CD4-positive, alpha-beta memory T cell (primary cell): ENCODE measurements at regions of chr15 and their contacts with region 1.

Region 1: GRCh38 chr15:74010929-74011540 is 16.5 kb downstream of the PML start:
- DNase-seq: no peak
- H3K4me3 ChIP-seq: no peak overlapping the region
- H3K4me3 Mint-ChIP-seq: no peak overlapping the region
- H3K27ac ChIP-seq: no peak overlapping the region
- H3K27ac Mint-ChIP-seq: peak overlapping the region in 4 of 7 donors; percentile 38 to 70 (median 52)
- H3K4me1 ChIP-seq: peaks cover 72% of the 10 kb centered on the region
- H3K4me1 Mint-ChIP-seq: peaks cover 50 to 81% (median 68%) of the 10 kb centered on the region in 4 donors
- H3K27me3 ChIP-seq: no peaks in the 10 kb centered on the region
- H3K27me3 Mint-ChIP-seq: no peaks in the 10 kb centered on the region

Region 2: DNA sequence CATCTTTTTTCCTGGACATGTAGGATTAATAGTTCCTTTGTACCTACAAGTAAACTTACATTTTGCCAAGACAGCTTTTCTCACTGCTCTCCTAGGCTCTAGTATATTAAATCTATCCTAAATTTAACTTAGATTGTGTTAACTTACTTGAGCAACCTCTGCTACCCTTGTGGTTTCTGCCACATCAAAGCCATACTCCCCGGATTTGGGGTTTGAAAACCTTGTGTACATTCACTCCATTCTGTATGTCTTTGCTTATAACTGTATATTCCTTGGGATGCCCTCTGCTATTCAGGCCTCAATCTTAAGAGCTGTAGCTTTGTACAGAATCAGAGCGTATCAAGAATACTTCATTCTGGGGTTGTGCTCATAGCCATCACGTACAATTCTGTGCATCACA is 1476.5 kb before region 1 on chr15:
- CTCF ChIA-PET with region 1: no interaction called
- POLR2A ChIA-PET with region 1: no interaction called
- intact Hi-C with region 1: no loop called
- DNase-seq: peak; percentile 32 to 76 (median 62)
- H3K4me3 ChIP-seq: no peak overlapping the region
- H3K4me3 Mint-ChIP-seq: peak overlapping the region in 6 of 8 donors; percentile 4 to 72 (median 48)
- H3K27ac ChIP-seq: no peak overlapping the region
- H3K27ac Mint-ChIP-seq: peak overlapping the region in 3 of 7 donors; percentile 10 to 77 (median 53)
- H3K4me1 ChIP-seq: peaks cover 37% of the 10 kb centered on the region
- H3K4me1 Mint-ChIP-seq: peaks cover 34 to 74% (median 50%) of the 10 kb centered on the region in 4 donors
- H3K27me3 ChIP-seq: no peaks in the 10 kb centered on the region
- H3K27me3 Mint-ChIP-seq: no peaks in the 10 kb centered on the region

Region 3: DNA sequence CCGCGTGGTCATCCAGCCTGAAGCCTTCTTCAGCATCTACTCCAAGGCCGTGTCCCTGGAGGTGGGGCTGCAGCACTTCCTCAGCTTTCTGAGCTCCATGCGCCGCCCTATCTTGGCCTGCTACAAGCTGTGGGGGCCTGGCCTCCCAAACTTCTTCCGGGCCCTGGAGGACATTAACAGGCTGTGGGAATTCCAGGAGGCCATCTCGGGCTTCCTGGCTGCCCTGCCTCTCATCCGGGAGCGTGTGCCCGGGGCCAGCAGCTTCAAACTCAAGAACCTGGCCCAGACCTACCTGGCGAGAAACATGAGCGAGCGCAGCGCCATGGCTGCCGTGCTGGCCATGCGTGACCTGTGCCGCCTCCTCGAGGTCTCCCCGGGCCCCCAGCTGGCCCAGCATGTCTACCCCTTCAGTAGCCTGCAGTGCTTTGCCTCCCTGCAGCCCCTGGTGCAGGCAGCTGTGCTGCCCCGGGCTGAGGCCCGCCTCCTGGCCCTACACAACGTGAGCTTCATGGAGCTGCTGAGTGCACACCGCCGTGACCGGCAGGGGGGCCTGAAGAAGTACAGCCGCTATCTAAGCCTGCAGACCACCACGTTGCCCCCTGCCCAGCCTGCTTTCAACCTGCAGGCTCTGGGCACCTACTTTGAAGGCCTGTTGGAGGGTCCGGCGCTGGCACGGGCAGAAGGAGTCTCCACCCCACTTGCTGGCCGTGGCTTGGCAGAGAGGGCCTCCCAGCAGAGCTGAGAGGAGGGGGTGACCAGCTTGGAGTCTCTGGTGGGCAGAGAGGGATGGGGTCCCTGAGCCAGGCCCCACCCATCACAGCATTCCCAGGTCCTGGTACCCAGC is 33.5 kb after region 1 on chr15:
- CTCF ChIA-PET with region 1: interaction called, 11 read pairs
- POLR2A ChIA-PET with region 1: interaction called, 3 read pairs
- intact Hi-C with region 1: no loop called
- DNase-seq: no peak
- H3K4me3 ChIP-seq: no peak overlapping the region
- H3K4me3 Mint-ChIP-seq: no peak overlapping the region
- H3K27ac ChIP-seq: no peak overlapping the region
- H3K27ac Mint-ChIP-seq: peak overlapping the region in 1 of 7 donors; percentile 36
- H3K4me1 ChIP-seq: peaks cover 12% of the 10 kb centered on the region
- H3K4me1 Mint-ChIP-seq: peaks cover 5 to 17% (median 10%) of the 10 kb centered on the region in 4 donors
- H3K27me3 ChIP-seq: no peaks in the 10 kb centered on the region
- H3K27me3 Mint-ChIP-seq: no peaks in the 10 kb centered on the region

Region 4: GRCh38 chr15:74291101-74292071 is 280.4 kb after region 1 on chr15:
- CTCF ChIA-PET with region 1: no interaction called
- POLR2A ChIA-PET with region 1: no interaction called
- intact Hi-C with region 1: no loop called
- DNase-seq: peak; percentile 40 to 61 (median 46)
- H3K4me3 ChIP-seq: no peak overlapping the region
- H3K4me3 Mint-ChIP-seq: no peak overlapping the region
- H3K27ac ChIP-seq: no peak overlapping the region
- H3K27ac Mint-ChIP-seq: no peak overlapping the region
- H3K4me1 ChIP-seq: no peaks in the 10 kb centered on the region
- H3K4me1 Mint-ChIP-seq: peaks cover 0 to 6% (median 0%) of the 10 kb centered on the region in 4 donors
- H3K27me3 ChIP-seq: no peaks in the 10 kb centered on the region
- H3K27me3 Mint-ChIP-seq: peaks cover 26 to 36% of the 10 kb centered on the region in 2 donors

Region 5: DNA sequence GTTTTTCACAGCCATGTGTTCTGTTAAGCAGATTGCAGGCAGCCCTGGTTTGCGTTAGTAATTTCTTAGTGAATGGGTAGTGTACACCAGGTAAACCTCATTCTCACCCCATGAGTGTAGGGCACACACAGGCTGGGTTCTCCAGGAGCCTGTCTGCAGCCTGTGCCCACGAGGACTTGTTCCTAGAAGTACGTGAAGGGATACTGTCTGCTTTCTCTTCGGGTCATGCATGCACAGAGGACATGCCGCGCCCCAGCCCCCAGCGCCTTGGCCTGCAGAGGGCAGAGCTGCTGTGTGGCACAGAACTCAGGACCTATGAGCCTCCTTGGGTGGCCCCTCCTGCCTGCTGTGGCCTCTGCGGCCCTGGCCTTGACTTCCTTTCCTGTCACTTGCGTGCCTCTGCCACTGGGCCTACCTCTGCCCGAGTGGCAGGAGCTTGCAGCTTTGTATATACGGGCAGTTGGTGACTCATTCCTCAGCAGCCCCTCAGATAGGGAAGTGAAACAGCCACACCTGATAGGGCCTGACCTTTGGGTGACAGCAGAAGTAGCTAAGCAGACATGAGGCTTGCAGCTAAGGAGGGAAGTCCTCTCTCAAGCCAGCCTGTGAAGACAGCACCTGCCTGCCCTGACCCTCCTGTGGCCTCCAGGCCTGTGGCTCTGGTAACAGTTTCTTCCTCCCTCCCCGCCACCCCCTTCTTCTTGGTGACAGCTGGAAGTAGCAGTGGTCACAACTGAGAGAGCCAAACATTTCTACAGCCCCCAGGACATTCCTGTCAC is 1031.9 kb after region 1 on chr15:
- CTCF ChIA-PET with region 1: no interaction called
- POLR2A ChIA-PET with region 1: no interaction called
- intact Hi-C with region 1: no loop called
- DNase-seq: peak; percentile 31 to 60 (median 37)
- H3K4me3 ChIP-seq: no peak overlapping the region
- H3K4me3 Mint-ChIP-seq: peak overlapping the region in 4 of 8 donors; percentile 30 to 49 (median 36)
- H3K27ac ChIP-seq: no peak overlapping the region
- H3K27ac Mint-ChIP-seq: peak overlapping the region in 5 of 7 donors; percentile 19 to 82 (median 71)
- H3K4me1 ChIP-seq: peaks cover 40% of the 10 kb centered on the region
- H3K4me1 Mint-ChIP-seq: peaks cover 13 to 52% (median 29%) of the 10 kb centered on the region in 4 donors
- H3K27me3 ChIP-seq: no peaks in the 10 kb centered on the region
- H3K27me3 Mint-ChIP-seq: no peaks in the 10 kb centered on the region